ENCODE measurements at regions of chr18 and their contacts with region 1.

Region 1: DNA sequence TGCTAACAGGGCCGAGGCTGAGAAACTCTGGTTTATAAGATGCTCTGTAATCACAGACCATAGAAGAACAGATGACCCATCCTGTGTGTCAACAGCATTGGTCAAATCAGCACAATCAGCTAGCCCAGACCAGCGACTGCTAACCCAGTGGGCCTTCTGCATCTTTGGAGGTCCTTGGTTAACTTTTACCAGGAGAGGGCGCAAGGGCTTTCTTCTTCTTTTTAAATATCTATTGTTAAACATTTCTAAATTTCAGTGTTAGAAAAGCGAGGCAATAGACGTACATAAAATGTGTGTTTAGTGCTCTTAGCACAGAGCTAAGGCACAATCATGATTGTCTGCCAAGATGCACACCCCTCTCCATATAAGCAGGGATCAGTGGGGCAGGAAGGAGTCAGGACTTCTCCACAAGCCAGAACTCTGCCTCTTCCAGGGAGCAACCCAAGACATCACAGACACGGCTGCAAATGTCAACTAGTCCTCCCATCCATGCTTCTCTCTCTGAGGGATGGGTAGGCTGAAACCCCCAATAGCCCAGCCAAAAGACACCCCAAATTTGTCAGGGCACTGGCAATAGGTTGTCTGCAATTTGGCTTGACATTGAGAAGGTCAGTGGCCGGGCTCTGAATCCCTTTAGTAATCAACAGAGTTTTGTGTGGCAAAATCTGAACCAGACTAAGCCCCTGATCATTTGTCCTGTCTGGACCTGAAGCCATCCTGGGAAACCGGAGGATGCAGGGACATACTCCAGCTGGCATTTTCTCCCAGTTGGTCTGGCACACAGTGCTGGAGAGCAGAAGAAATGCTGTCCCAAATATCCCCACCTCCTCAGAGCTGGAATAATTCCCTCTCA is 188.2 kb downstream of the BCL2 start:
- DNase-seq: no peak
- ATAC-seq: peak; percentile 73
- H3K4me3 ChIP-seq: no peak overlapping the region
- H3K27ac ChIP-seq: no peak overlapping the region
- H3K4me1 ChIP-seq: peaks cover 11% of the 10 kb centered on the region
- H3K27me3 ChIP-seq: no peaks in the 10 kb centered on the region
- CTCF ChIP-seq: peak; percentile 71

Region 2: GRCh38 chr18:62925031-62925688 is 206.2 kb before region 1 on chr18:
- intact Hi-C with region 1: no loop called
- DNase-seq: no peak
- ATAC-seq: no peak
- H3K4me3 ChIP-seq: no peak overlapping the region
- H3K27ac ChIP-seq: no peak overlapping the region
- H3K4me1 ChIP-seq: no peaks in the 10 kb centered on the region
- H3K27me3 ChIP-seq: no peaks in the 10 kb centered on the region
- CTCF ChIP-seq: no peak

Region 3: GRCh38 chr18:63192885-63193349 is 61.6 kb after region 1 on chr18:
- intact Hi-C with region 1: no loop called
- DNase-seq: no peak
- ATAC-seq: peak; percentile 63
- H3K4me3 ChIP-seq: no peak overlapping the region
- H3K27ac ChIP-seq: no peak overlapping the region
- H3K4me1 ChIP-seq: peaks cover 4% of the 10 kb centered on the region
- H3K27me3 ChIP-seq: no peaks in the 10 kb centered on the region
- CTCF ChIP-seq: no peak

Region 4: GRCh38 chr18:63320046-63320689 is 188.8 kb after region 1 on chr18:
- intact Hi-C with region 1: loop called (anchors 5 kb)
- DNase-seq: peak; percentile 90
- ATAC-seq: peak; percentile 84
- H3K4me3 ChIP-seq: peak overlapping the region; percentile 84
- H3K27ac ChIP-seq: peak overlapping the region; percentile 59
- H3K4me1 ChIP-seq: peaks cover 26% of the 10 kb centered on the region
- H3K27me3 ChIP-seq: no peaks in the 10 kb centered on the region
- CTCF ChIP-seq: no peak

Region 5: DNA sequence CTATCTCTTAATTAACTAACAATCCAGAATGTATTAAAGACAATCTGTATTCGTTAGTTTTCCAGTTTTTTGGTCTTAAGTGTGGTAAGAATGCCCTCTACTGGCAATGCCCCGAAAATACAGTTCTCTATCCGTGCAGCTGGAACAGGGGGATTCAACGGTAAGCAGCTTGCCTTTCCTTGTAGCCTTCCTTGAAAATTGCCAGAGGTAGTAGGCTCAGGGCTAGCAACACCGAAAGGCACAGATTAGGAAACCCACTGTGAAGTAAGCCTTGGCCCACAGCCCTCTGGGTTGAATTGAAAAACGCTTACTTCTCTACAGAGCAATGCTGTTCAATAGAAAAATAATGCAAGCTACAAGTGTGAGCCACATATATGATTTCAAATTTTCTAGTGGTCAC is 308.0 kb after region 1 on chr18:
- intact Hi-C with region 1: loop called (anchors 10 kb)
- DNase-seq: no peak
- ATAC-seq: peak; percentile 85
- H3K4me3 ChIP-seq: no peak overlapping the region
- H3K27ac ChIP-seq: no peak overlapping the region
- H3K4me1 ChIP-seq: no peaks in the 10 kb centered on the region
- H3K27me3 ChIP-seq: no peaks in the 10 kb centered on the region
- CTCF ChIP-seq: peak; percentile 83

Region 6: DNA sequence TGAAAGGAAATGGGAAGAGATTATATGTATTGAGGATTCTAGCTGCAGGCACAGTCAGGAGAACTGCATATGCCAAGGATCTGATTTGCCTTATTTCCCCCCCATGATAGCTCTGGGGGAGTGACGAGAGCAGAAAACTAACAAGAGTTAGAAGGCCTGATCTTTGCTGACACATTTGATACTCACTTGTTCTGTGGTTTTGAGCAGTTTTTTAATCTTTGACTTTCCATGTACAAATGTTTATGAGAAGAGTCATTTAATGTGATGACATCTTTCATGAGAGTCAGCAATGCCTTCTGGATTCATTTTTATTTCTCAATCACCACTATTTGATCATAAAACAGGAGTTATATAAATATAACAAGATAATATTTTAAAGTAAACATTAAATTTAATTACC is 631.2 kb after region 1 on chr18:
- intact Hi-C with region 1: no loop called
- DNase-seq: no peak
- ATAC-seq: no peak
- H3K4me3 ChIP-seq: no peak overlapping the region
- H3K27ac ChIP-seq: no peak overlapping the region
- H3K4me1 ChIP-seq: no peaks in the 10 kb centered on the region
- H3K27me3 ChIP-seq: no peaks in the 10 kb centered on the region
- CTCF ChIP-seq: no peak